K562 (cell line): ENCODE measurements at regions of chr17 and their contacts with region 1.

Region 1: GRCh38 chr17:21284319-21285163 is at the start of gene MAP2K3:
- DNase-seq: peak; percentile 93 to 97 (median 96)
- ATAC-seq: peak; percentile 96
- H3K4me3 ChIP-seq: peak within 1 kb of the TSS; percentile 68
- H3K27ac ChIP-seq: peak within 1 kb of the TSS; percentile 57; the same call in 1 of the 3 replicates
- H3K4me1 ChIP-seq: peaks cover 14 to 58% of the 10 kb centered on the region in 2 experiments; a peak in 4 of 5 replicates
- H3K27me3 ChIP-seq: no peaks in the 10 kb centered on the region
- CTCF ChIP-seq: no peak
- EP300 ChIP-seq: no peak
- POLR2A ChIP-seq: no peak
- RAD21 ChIP-seq: no peak
- polyA plus RNA-seq, gene MAP2K3: 0.18 to 0.38 TPM

Region 2: DNA sequence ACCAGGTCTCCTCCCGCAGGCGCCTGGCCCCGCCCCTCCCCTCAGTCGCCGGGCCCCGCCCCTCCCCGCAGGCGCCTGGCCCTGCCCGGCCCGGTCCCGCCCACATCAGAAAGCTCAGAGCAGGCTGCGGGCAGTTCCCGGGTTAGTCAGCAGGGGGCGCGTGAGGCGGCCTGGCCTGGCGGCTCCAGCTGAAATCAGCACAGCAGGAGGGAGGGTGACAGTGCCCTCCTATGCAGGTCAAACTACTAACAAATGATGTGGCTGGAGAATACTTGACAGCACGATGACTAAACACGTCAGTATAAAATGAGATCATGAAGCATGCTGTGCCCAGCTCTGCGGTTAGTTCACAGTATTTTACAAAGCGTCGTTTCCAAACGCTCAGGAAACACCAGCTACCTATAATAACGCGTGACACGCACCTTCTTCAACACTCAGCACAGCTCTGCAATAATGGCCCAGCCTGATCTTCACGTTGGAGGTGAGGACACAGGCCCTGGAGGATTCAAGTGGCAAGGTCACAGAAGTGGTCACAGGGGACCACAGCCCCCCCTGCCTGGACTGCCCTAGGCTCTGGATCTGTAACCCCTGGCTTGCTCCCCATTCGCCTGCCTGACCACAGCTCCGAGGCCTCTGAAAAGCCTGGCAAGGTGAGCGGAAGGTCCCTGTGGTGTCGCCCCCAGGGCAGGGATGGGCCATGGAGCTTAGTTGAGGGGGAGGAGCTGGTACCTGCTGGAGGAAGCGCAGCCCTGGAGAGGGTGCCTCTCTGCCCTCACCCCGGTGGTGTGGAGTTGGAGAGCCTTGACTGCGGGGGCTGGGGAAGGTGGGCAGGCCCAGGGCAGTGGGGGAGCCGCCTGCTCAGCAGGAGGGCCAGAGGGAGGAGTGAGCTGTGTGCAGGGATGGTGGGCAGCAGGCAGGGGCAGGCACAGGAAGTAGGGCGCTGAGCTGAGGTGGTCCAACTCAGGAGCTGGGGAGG is 172.8 kb after region 1 on chr17:
- CTCF ChIA-PET with region 1: no interaction called
- POLR2A ChIA-PET with region 1: no interaction called
- in situ Hi-C with region 1: no loop called
- intact Hi-C with region 1: loop called (anchors 5 kb)
- DNase-seq: peak; percentile 87 to 95 (median 92)
- ATAC-seq: peak; percentile 99
- H3K4me3 ChIP-seq: no peak overlapping the region
- H3K27ac ChIP-seq: no peak overlapping the region
- H3K4me1 ChIP-seq: peaks cover 0 to 12% of the 10 kb centered on the region in 2 experiments; a peak in 4 of 5 replicates
- H3K27me3 ChIP-seq: peaks cover 0 to 6% of the 10 kb centered on the region in 2 experiments; a peak in 1 of 5 replicates
- CTCF ChIP-seq: peak; percentile 73 to 88 (median 80)
- EP300 ChIP-seq: no peak
- POLR2A ChIP-seq: no peak
- RAD21 ChIP-seq: peak; percentile 68 to 77